GM12878 (cell line): ENCODE measurements at regions of chr15 and their contacts with region 1.

Region 1: DNA sequence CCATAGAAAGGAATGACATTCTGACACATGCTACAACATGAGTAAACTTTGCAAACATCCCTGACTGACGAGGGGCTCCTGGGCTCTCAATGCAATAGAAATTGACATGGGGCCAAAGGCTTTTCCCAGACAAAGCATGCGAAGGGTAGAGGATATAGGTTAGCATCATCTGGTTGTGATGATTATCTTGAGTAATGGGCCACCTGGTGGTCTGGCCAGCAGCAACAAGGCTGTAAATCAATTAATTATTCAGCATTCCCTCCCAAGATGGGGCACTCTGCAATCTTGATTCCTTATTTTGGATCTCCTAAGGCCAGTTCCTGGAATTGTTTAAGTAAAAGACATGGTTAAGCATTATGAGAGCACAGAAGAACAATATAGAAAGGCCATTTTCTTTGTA is 99.2 kb downstream of the AGBL1 start:
- DNase-seq: no peak
- ATAC-seq: no peak
- H3K4me3 ChIP-seq: no peak overlapping the region
- H3K27ac ChIP-seq: no peak overlapping the region
- H3K4me1 ChIP-seq: no peaks in the 10 kb centered on the region
- H3K27me3 ChIP-seq: no peaks in the 10 kb centered on the region; a peak in 1 of 4 replicates
- CTCF ChIP-seq: no peak
- EP300 ChIP-seq: no peak
- POLR2A ChIP-seq: no peak
- RAD21 ChIP-seq: no peak

Region 2: DNA sequence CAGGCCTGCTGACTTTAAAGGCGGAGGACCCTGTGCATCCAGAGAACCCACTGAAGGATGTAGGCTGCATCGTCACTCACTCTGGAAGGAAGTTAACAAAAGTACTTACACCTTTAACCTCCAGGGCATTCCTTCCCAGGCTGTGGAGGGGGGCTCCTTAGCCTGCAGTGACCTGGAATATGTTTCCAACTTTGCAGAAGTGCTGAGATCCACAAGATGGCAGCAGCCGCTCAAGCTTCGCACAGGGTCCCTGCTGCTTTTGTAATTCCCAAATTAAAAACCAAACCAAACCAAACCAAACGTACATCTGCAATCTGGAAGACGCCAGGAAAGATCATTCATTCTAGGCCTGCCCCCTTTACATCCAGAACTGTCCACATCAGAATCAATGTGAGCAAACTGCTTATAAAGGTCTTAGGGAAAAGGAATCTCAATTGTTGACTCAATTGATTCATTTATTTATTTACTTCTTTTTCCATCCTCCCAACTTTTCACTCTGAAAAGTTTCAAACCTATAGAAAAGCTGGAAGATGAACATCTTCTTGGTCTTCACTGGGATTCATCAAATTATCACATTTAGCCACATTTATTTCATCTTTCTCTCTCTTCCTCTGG is 313.7 kb before region 1 on chr15:
- CTCF ChIA-PET with region 1: no interaction called
- POLR2A ChIA-PET with region 1: no interaction called
- RAD21 ChIA-PET with region 1: no interaction called
- SMC1A ChIA-PET with region 1: no interaction called
- in situ Hi-C with region 1: no loop called
- intact Hi-C with region 1: loop called (anchors 5 kb)
- DNase-seq: no peak
- ATAC-seq: peak; percentile 66
- H3K4me3 ChIP-seq: no peak overlapping the region
- H3K27ac ChIP-seq: no peak overlapping the region
- H3K4me1 ChIP-seq: no peaks in the 10 kb centered on the region
- H3K27me3 ChIP-seq: no peaks in the 10 kb centered on the region; a peak in 1 of 4 replicates
- CTCF ChIP-seq: peak; percentile 53 to 77 (median 66); a peak in 5 of 6 replicates
- EP300 ChIP-seq: no peak
- POLR2A ChIP-seq: no peak
- RAD21 ChIP-seq: peak; percentile 77